ENCODE measurements at regions of chr17 and their contacts with region 1.

Region 1: DNA sequence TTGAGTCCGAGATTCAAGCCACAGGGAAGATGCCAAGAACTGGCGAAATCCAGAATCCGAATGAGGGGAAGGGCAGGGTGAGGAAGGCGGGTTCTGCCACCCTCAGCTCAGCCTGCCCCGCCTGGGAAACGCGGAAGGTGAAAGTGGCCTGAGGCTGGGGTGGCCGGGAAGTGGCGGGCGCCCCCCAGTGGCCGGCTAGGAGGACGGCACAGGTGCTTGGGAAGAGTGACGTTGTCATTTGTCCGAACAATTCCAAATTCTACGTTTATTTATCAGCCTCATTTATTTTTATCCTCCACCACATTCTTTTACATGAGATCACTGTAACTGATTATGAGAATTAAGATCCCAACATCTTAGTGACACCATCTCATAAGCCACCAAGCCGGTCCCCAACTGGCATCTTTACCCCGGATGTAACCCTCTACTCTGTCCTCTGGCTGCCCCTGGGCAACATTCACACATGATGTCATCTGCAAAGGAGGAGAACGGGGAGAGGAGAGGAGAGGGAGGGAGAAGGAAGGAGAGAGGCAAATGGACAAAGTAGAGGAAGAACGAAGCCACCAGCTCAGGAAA is 21.3 kb downstream of the SRCIN1 start:
- DNase-seq: peak in 1 of 2 experiments; percentile 83
- H3K4me3 ChIP-seq: no peak overlapping the region
- H3K4me3 Mint-ChIP-seq: no peak overlapping the region
- H3K27ac Mint-ChIP-seq: peak overlapping the region; percentile 11
- H3K4me1 ChIP-seq: peaks cover 12% of the 10 kb centered on the region
- H3K4me1 Mint-ChIP-seq: peaks cover 8% of the 10 kb centered on the region
- H3K27me3 ChIP-seq: no peaks in the 10 kb centered on the region
- H3K27me3 Mint-ChIP-seq: no peaks in the 10 kb centered on the region
- CTCF ChIP-seq: peak; percentile 95 to 96

Region 2: GRCh38 chr17:38598536-38598935 is 14.1 kb after region 1 on chr17:
- CTCF ChIA-PET with region 1: interaction called, 13 read pairs
- POLR2A ChIA-PET with region 1: interaction called, 3 read pairs
- intact Hi-C with region 1: no loop called
- DNase-seq: peak; percentile 96
- H3K4me3 ChIP-seq: no peak overlapping the region
- H3K4me3 Mint-ChIP-seq: no peak overlapping the region
- H3K27ac Mint-ChIP-seq: peak overlapping the region; percentile 72
- H3K4me1 ChIP-seq: peaks cover 41% of the 10 kb centered on the region
- H3K4me1 Mint-ChIP-seq: peaks cover 35% of the 10 kb centered on the region
- H3K27me3 ChIP-seq: no peaks in the 10 kb centered on the region
- H3K27me3 Mint-ChIP-seq: no peaks in the 10 kb centered on the region
- CTCF ChIP-seq: no peak